T-cell (primary cell): ENCODE measurements at regions of chr19 and their contacts with region 1.

Region 1: GRCh38 chr19:42176990-42177685 is 40.3 kb downstream of the DEDD2 start:
- DNase-seq: peak; percentile 51 to 89 (median 65)
- ATAC-seq: peak; percentile 95 to 96 (median 96)
- H3K4me3 ChIP-seq: peak overlapping the region in 1 of 2 donors; percentile 51
- H3K4me3 Mint-ChIP-seq: no peak overlapping the region
- H3K27ac ChIP-seq: no peak overlapping the region
- H3K27ac Mint-ChIP-seq: no peak overlapping the region
- H3K4me1 ChIP-seq: peaks cover 0 to 26% of the 10 kb centered on the region in 2 experiments
- H3K4me1 Mint-ChIP-seq: peaks cover 14 to 21% (median 18%) of the 10 kb centered on the region in 3 donors
- H3K27me3 ChIP-seq: peaks cover 9 to 58% of the 10 kb centered on the region in 2 experiments
- H3K27me3 Mint-ChIP-seq: peaks cover 17 to 21% of the 10 kb centered on the region in 2 donors

Region 2: DNA sequence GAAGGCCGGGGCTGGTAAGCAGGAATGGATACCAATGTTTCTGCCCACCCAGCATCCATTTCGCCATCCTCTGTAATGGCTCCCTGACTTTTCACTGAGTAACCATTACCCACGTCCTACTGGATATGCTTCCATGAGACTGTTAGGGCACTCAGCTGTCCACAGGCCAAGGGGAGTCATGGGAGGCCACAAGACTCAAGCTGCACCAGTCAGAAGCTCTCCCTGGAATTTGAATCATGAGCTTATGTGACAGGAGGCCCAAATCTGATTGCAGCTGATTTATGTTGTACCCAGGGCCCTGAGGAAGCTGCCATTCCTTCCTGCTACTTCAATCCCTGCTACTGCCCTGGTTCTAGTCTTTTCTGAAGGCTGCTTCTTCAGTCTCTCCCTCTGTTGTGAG is 12.0 kb after region 1 on chr19:
- CTCF ChIA-PET with region 1: interaction called in 1 of 2 experiments, 9 read pairs
- POLR2A ChIA-PET with region 1: interaction called in 1 of 2 experiments, 12 read pairs
- DNase-seq: no peak
- ATAC-seq: no peak
- H3K4me3 ChIP-seq: no peak overlapping the region
- H3K4me3 Mint-ChIP-seq: no peak overlapping the region
- H3K27ac ChIP-seq: no peak overlapping the region
- H3K27ac Mint-ChIP-seq: peak overlapping the region in 1 of 2 donors; percentile 24
- H3K4me1 ChIP-seq: peaks cover 18 to 43% of the 10 kb centered on the region in 2 experiments
- H3K4me1 Mint-ChIP-seq: peaks cover 57 to 79% (median 68%) of the 10 kb centered on the region in 3 donors
- H3K27me3 ChIP-seq: no peaks in the 10 kb centered on the region
- H3K27me3 Mint-ChIP-seq: no peaks in the 10 kb centered on the region